ENCODE measurements at regions of chr3 and their contacts with region 1.

Region 1: DNA sequence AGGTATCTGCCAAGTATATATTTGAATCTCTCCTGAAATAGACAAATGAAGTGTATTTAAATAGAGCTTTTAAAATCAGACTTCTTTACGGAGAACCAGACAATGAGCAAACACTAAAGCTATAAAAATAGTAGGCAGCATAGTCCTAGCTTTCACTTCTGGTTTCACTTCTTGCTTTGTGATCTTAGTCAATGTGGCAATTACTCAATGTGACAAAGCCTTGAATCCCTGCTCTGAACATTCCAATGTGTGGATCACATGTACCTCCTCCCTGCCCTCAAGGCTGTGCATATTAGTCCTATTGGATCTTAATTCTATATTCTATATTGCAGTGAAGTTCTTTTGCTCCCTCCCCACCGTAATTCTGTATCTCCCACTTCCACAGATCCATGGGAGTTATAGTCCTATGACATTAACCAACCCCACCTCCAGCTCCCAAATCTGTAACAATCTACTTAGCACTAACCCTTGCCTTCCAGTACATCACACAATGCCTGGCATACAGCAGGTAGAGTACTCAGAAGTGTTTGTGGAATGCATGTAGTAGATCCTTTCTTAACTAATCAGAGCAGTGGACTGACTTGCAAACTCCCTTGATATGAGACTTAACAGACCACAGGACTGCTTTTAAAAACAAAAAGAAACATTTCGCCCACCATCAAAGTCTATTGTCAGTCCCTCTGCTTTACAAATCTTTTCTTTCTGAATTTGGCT is 24.3 kb upstream of the CP start:
- DNase-seq: peak; percentile 73
- H3K4me3 Mint-ChIP-seq: peak overlapping the region; percentile 52
- H3K27ac Mint-ChIP-seq: peak overlapping the region; percentile 85
- H3K4me1 Mint-ChIP-seq: peaks cover 29% of the 10 kb centered on the region
- H3K27me3 Mint-ChIP-seq: no peaks in the 10 kb centered on the region
- CTCF ChIP-seq: no peak

Region 2: DNA sequence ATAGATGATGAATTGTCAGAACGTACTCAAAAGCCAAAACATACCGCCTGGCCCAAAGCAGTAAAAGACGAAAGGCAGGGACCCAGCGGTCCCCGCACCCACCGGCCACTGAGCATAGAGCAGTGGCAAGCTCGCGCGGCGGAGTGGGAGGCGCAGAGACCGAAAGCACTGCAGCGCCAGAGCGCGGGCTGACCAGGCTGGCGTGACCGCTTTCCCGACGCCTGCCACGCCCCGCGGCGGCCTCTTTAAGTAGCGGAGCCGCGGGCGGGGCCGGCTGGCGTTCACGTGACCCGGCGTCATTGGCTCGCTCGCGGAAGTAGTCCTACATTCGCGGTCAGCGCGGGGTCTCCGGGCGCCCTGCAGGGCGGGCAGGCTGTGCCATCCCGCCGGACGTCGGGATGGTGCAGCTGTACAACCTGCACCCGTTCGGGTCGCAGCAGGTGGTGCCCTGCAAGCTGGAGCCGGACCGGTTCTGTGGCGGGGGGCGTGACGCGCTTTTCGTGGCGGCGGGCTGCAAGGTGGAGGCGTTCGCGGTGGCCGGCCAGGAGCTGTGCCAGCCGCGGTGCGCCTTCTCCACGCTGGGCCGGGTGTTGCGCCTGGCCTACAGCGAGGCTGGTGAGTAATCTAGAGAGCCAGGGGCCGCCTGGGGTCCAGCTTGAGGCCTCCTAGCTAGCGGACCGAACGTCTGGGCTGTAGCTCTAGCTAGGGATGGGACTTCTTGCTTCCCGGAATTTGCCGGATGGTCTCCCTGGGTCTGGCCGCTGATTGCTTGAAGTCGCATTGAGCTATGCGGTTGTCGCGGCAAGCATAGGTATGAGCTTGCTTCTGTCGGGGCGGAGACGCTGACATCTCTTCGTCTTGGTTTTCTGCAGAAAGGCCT is 116.3 kb before region 1 on chr3 and contains the start of gene HPS3:
- CTCF ChIA-PET with region 1: interaction called, 3 read pairs
- POLR2A ChIA-PET with region 1: interaction called, 13 read pairs
- intact Hi-C with region 1: no loop called
- DNase-seq: peak; percentile 88
- H3K4me3 Mint-ChIP-seq: peak within 1 kb of the TSS; percentile 93
- H3K27ac Mint-ChIP-seq: peak within 1 kb of the TSS; percentile 75
- H3K4me1 Mint-ChIP-seq: peaks cover 28% of the 10 kb centered on the region
- H3K27me3 Mint-ChIP-seq: no peaks in the 10 kb centered on the region
- CTCF ChIP-seq: no peak
- total RNA-seq, gene HPS3: 7.7 and 11.1 TPM in 2 replicates

Region 3: DNA sequence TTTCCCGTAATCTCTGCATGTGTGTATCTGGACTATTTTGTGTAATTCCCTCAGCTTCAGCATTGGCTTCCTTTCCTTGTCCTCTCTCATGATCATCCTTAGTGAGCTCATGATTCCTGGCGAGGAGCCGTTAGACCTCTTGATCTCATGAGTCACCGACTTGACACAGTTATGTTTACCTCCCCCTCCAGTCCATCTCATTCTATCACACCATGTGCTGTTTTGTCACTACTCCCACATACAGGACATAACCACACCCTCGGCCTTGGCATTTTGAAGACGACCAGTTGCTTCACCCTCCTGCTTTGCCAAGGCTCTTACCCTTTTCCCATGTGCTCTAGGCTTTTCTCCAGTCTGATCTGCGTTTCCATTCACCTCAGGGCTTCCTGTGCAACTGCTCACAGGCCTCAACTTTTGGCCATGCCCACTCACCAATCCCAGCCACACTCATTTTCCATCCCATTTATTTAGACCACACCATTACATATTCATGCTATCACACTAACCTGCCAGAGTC is 65.8 kb before region 1 on chr3:
- CTCF ChIA-PET with region 1: interaction called, 3 read pairs
- POLR2A ChIA-PET with region 1: interaction called, 19 read pairs
- intact Hi-C with region 1: loop called (anchors 5 kb)
- DNase-seq: peak; percentile 100
- H3K4me3 Mint-ChIP-seq: no peak overlapping the region
- H3K27ac Mint-ChIP-seq: no peak overlapping the region
- H3K4me1 Mint-ChIP-seq: peaks cover 6% of the 10 kb centered on the region
- H3K27me3 Mint-ChIP-seq: no peaks in the 10 kb centered on the region
- CTCF ChIP-seq: no peak

Region 4: GRCh38 chr3:149234671-149235245 is 11.1 kb before region 1 on chr3:
- CTCF ChIA-PET with region 1: interaction called, 4 read pairs
- POLR2A ChIA-PET with region 1: interaction called, 19 read pairs
- intact Hi-C with region 1: no loop called
- DNase-seq: peak; percentile 10
- H3K4me3 Mint-ChIP-seq: no peak overlapping the region
- H3K27ac Mint-ChIP-seq: peak overlapping the region; percentile 77
- H3K4me1 Mint-ChIP-seq: peaks cover 14% of the 10 kb centered on the region
- H3K27me3 Mint-ChIP-seq: no peaks in the 10 kb centered on the region
- CTCF ChIP-seq: no peak

Region 5: DNA sequence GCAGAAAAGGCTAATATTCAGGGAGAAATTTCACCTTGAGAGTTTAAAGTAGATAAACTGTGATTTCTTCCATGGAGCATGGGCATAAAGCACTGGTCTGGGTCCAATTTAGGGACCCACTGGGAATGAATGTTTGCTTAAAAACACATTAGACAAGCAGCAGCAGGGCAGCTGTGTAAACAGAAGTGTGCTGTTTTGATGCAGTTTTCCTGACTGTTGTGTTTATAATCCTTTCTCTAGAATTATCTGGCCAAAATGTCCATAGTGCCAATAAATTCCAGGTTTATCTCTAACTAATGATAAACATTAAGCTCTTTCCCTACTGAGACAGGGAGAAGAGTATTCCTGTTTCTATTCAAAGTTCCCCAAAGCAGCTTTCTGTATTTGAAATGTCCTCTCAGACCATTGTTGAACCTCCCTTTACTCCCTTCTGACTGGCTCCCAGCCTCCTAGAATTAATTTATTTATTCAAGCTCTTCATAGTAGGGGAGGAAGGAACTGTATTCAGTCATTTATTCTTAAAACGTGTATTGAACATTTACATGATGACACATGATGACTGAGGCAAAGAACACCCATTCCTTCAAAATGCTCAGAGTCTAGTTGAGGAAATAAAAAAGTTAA is 94.5 kb after region 1 on chr3:
- CTCF ChIA-PET with region 1: no interaction called
- POLR2A ChIA-PET with region 1: no interaction called
- intact Hi-C with region 1: no loop called
- DNase-seq: no peak
- H3K4me3 Mint-ChIP-seq: no peak overlapping the region
- H3K27ac Mint-ChIP-seq: peak overlapping the region; percentile 85
- H3K4me1 Mint-ChIP-seq: peaks cover 10% of the 10 kb centered on the region
- H3K27me3 Mint-ChIP-seq: no peaks in the 10 kb centered on the region
- CTCF ChIP-seq: no peak

Measured in MCF 10A (cell line).